GM12878 (cell line): ENCODE measurements at regions of chr20 and their contacts with region 1.

Region 1: DNA sequence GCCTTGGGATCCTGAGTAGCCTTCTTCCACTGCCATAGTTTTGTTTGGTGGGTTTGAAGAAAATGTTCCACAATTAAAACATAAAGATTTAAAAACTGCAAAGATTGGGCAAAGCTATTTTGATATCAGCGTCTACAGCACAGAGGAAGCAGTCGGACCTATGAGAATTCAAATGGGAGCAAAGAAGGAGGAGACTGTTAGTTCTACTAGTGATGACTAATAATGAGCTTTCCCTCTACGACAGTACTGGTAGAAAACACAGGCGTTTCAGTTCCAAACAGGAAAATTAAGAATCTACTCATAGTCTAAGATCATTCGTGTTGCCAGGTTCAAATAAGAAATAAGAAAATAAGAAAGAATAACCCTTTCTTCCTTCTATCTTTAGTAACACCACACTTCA is 121.2 kb downstream of the INSM1 start:
- DNase-seq: peak; percentile 66
- ATAC-seq: peak; percentile 96
- H3K4me3 ChIP-seq: no peak overlapping the region
- H3K27ac ChIP-seq: peak overlapping the region; percentile 73
- H3K4me1 ChIP-seq: peaks cover 32% of the 10 kb centered on the region
- H3K27me3 ChIP-seq: no peaks in the 10 kb centered on the region
- CTCF ChIP-seq: no peak
- EP300 ChIP-seq: peak; percentile 74 to 82; a peak in 3 of 4 replicates
- POLR2A ChIP-seq: no peak
- RAD21 ChIP-seq: no peak

Region 2: DNA sequence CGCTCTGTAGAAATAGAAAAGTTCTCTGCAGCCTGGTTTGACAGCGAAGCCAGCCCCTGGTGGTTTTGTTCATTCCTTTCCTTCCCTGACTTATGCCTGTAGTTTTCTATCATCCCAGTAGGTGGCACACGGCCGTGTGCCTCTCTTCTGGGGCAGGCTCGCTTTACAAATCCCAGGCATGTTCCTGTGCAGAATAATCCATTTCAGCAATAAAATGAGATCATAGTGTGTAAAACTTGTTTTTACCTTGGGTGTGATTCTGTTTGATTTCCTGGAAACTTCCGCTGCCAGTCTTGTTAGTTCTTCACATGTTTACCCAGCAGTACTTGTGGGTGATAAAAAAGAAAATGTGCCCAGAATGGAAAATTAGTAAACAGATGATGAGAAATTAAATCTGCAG is 128.6 kb before region 1 on chr20:
- CTCF ChIA-PET with region 1: no interaction called
- POLR2A ChIA-PET with region 1: no interaction called
- RAD21 ChIA-PET with region 1: no interaction called
- SMC1A ChIA-PET with region 1: no interaction called
- in situ Hi-C with region 1: no loop called
- intact Hi-C with region 1: loop called (anchors 10 kb)
- DNase-seq: no peak
- ATAC-seq: peak; percentile 86
- H3K4me3 ChIP-seq: no peak overlapping the region
- H3K27ac ChIP-seq: no peak overlapping the region
- H3K4me1 ChIP-seq: no peaks in the 10 kb centered on the region
- H3K27me3 ChIP-seq: peaks cover 16 to 28% of the 10 kb centered on the region in 2 experiments
- CTCF ChIP-seq: peak; percentile 69 to 84 (median 78)
- EP300 ChIP-seq: no peak
- POLR2A ChIP-seq: no peak
- RAD21 ChIP-seq: peak; percentile 77

Region 3: GRCh38 chr20:20466341-20466879 is 22.6 kb before region 1 on chr20:
- CTCF ChIA-PET with region 1: interaction called, 5 read pairs
- POLR2A ChIA-PET with region 1: interaction called, 6 read pairs
- RAD21 ChIA-PET with region 1: interaction called, 9 read pairs
- SMC1A ChIA-PET with region 1: interaction called, 40 read pairs
- in situ Hi-C with region 1: no loop called
- intact Hi-C with region 1: loop called (anchors 1 kb)
- DNase-seq: peak; percentile 92
- ATAC-seq: peak; percentile 87
- H3K4me3 ChIP-seq: no peak overlapping the region
- H3K27ac ChIP-seq: peak overlapping the region; percentile 86
- H3K4me1 ChIP-seq: peaks cover 36% of the 10 kb centered on the region
- H3K27me3 ChIP-seq: no peaks in the 10 kb centered on the region
- CTCF ChIP-seq: no peak
- EP300 ChIP-seq: peak; percentile 77; a peak in 3 of 4 replicates
- POLR2A ChIP-seq: peak; percentile 61
- RAD21 ChIP-seq: no peak

Region 4: DNA sequence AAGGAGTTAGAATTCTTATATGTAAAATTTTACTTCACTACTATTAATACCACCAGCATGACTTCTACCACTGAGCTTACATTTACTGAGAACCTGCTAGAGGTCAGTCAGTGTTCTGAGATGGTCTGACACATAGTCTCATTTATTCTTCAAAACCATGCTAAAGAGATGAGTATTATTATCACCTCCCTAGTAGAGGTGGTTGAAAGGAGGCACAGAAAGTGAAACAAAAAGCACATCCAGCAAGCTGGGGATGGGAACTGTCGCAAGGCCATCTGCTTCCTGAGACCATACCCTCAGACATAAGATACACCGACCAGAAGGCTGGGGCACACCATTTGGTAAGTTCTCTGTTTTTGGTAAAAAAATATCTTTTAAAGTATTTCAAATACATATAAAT is 16.5 kb after region 1 on chr20:
- CTCF ChIA-PET with region 1: interaction called, 6 read pairs
- POLR2A ChIA-PET with region 1: no interaction called
- RAD21 ChIA-PET with region 1: no interaction called
- SMC1A ChIA-PET with region 1: interaction called, 12 read pairs
- in situ Hi-C with region 1: no loop called
- intact Hi-C with region 1: no loop called
- DNase-seq: no peak
- ATAC-seq: peak; percentile 54
- H3K4me3 ChIP-seq: no peak overlapping the region
- H3K27ac ChIP-seq: no peak overlapping the region
- H3K4me1 ChIP-seq: no peaks in the 10 kb centered on the region
- H3K27me3 ChIP-seq: no peaks in the 10 kb centered on the region
- CTCF ChIP-seq: no peak
- EP300 ChIP-seq: no peak
- POLR2A ChIP-seq: no peak
- RAD21 ChIP-seq: no peak